ENCODE measurements at regions of chr2 and their contacts with region 1.

Region 1: DNA sequence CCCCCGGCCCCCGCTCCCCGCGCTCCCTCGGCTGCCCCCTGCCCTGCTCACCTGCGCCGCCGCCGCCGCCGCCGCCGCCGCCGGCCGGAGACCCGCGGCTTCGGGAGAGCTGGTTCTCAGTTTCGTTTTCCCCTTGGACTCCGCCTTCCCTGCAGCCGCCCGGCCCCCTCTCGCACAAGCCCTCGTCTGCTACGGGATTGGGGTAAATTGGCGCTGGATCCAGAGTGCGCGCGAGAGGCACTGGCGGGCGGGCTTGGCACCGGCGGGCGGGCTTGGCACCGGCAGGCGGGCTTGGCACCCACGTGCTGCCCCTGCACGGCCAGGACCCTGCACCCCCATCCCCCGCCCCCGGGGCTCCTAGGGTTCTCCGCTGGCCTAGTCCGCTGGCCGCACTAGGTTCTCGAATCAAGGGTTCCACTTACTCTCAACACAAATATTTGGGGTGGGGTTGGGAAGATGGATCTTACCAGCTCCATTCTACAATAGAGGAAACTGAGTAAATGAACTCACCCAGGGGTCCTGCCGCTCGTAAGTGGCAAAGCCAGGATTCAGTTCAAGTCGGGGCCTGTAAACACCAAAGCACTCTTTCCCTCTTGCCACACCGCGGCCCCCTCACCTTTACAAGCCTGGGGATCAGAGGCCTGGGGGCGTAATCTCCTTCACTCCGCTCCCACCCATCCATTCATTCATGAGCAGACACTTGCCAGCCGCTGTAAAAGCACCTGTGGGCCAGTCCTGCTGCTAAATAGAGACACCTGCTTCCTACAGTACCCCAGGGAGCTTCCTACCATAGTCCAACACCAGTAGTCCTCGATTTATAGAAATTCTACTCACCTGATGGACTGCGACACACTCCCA is at the start of gene EIF2AK2:
- DNase-seq: peak; percentile 83
- H3K4me3 Mint-ChIP-seq: peak within 1 kb of the TSS; percentile 94
- H3K27ac Mint-ChIP-seq: peak within 1 kb of the TSS; percentile 92
- H3K4me1 Mint-ChIP-seq: peaks cover 33% of the 10 kb centered on the region
- H3K27me3 Mint-ChIP-seq: no peaks in the 10 kb centered on the region
- total RNA-seq, gene EIF2AK2: 30.6 and 30.8 TPM in 2 replicates

Region 2: GRCh38 chr2:37083873-37084794 is 73.0 kb before region 1 on chr2 and contains the starts of genes GPATCH11 and HEATR5B:
- intact Hi-C with region 1: loop called (anchors 5 kb)
- DNase-seq: peak; percentile 90
- H3K4me3 Mint-ChIP-seq: no peak within 1 kb of the TSS
- H3K27ac Mint-ChIP-seq: no peak within 1 kb of the TSS
- H3K4me1 Mint-ChIP-seq: peaks cover 35% of the 10 kb centered on the region
- H3K27me3 Mint-ChIP-seq: no peaks in the 10 kb centered on the region
- total RNA-seq, gene GPATCH11: 14.4 and 14.9 TPM in 2 replicates
- total RNA-seq, gene HEATR5B: 15.3 and 16.8 TPM in 2 replicates

Region 3: DNA sequence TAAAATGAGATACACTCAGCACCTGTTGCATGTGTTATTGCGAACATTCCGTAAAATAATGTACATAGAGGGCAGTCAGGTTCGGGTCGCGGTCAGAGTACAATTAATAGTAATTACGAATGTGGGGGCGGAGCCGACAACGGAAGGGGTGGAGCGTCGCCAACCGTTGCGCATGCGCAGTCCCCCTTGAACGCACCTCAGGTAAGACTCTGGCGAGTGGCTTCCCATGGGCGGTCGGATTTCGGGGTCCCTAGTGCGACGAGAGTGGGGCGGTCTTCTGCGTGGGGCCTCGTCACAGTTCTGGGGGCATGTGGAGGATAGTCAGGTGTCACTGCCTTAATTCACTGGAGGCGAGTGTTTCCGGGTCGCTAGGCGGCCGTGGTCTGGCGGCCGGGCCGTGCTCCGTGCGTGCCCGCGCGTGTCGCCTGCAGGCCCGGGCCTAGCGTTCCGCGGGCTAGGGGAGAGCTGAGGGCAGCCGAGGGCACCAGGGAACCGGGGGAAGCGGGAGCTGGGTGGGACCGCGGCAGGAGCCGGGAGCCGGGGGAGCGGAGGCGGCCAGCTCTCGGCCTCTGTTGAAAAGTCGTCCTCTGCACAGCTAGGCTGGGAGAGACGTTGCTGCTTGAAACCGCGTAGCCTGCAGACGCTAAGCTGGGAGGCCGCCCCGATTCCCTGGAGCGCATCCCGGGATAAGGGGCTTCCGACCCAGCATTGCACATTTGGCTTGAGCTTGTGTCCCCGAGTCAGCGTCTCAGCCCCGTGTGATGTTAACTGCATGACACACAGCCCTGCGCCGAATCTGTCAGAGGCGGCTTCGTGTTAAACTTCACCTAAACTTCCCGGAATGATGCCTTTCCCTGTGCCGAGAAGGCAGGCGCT is 39.5 kb after region 1 on chr2 and contains the start of gene CEBPZOS:
- intact Hi-C with region 1: loop called (anchors 2 kb)
- DNase-seq: peak; percentile 82
- H3K4me3 Mint-ChIP-seq: peak within 1 kb of the TSS; percentile 96
- H3K27ac Mint-ChIP-seq: peak within 1 kb of the TSS; percentile 97
- H3K4me1 Mint-ChIP-seq: peaks cover 24% of the 10 kb centered on the region
- H3K27me3 Mint-ChIP-seq: peaks cover 1% of the 10 kb centered on the region
- total RNA-seq, gene CEBPZOS: 37.3 and 42.3 TPM in 2 replicates

Region 4: DNA sequence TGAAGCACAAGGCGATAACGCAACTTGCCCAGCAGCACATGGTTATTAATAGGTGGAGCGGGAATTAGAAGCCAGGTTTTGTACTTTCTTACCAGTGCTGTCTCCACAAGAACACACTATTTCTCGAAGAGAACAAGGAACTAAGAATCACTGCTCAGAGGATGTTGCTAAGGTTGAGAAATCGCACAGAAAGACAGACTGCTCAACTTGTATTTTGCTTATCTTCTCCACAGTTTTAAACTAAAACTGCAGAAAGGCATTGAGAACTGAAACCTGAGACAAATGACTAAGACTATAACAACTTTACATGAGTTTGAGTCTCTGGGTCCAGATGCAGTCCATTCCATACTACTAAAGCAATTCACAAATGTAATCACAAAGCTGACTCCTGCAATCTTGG is 161.3 kb after region 1 on chr2:
- intact Hi-C with region 1: no loop called
- DNase-seq: no peak
- H3K4me3 Mint-ChIP-seq: no peak overlapping the region
- H3K27ac Mint-ChIP-seq: no peak overlapping the region
- H3K4me1 Mint-ChIP-seq: peaks cover 33% of the 10 kb centered on the region
- H3K27me3 Mint-ChIP-seq: peaks cover 13% of the 10 kb centered on the region

Measured in activated T-helper 2 cell treated with anti-CD3 and anti-CD28 coated beads, Interferon-gamma antibody, Interleukin-2, Interleukin-4, amounts not matched to agents 10 μg/mL and 5 μg/mL and 100 μg/mL, durations not matched to agents 14 hours and 24 hours and 36 hours (primary cell).